ENCODE measurements at regions of chr7 and their contacts with region 1.

Region 1: GRCh38 chr7:142459551-142459963 is 201.7 kb upstream of the PRSS58 start:
- DNase-seq: peak; percentile 82 to 96
- H3K4me3 ChIP-seq: no peak overlapping the region
- H3K27ac ChIP-seq: peak overlapping the region; percentile 45
- H3K4me1 ChIP-seq: peaks cover 26% of the 10 kb centered on the region
- H3K27me3 ChIP-seq: no peaks in the 10 kb centered on the region
- CTCF ChIP-seq: peak; percentile 91

Region 2: DNA sequence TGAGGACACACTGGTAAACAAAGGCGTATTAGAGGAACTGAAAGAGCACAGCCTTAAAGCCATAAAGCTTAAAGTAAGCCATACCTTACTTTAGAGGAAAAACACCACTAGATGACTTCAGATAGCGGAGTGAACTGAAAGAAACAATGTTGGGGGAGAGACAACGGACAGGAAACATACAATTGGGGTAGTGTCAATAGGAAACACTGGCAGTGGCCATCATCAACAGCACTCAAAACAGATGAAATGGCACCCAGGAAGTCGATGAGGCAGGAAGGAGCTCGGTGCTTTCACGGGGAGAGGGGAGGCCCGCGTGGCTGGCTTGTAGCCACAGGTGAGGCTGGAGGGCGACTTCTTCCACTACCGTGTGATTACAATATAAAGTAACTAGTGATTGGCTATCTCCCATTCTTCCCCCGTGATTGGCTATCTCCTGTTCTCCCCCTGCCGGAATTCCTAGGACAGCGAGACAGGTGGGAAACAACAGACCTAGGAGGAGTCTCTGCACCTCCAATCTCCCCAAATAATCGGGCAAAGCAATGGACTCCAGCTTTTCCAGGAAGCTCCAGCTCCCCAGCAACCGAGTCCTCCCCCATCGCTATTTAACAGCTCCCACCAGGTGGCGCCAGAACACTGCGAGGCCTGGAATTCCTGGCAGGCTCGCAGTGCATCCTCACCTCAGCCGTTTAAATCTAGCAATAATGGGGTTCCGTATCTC is 483.6 kb before region 1 on chr7:
- CTCF ChIA-PET with region 1: no interaction called
- POLR2A ChIA-PET with region 1: no interaction called
- intact Hi-C with region 1: loop called (anchors 5 kb)
- DNase-seq: peak; percentile 44 to 86
- H3K4me3 ChIP-seq: no peak overlapping the region
- H3K27ac ChIP-seq: no peak overlapping the region
- H3K4me1 ChIP-seq: no peaks in the 10 kb centered on the region; the same call in 1 of the 2 replicates
- H3K27me3 ChIP-seq: no peaks in the 10 kb centered on the region
- CTCF ChIP-seq: peak; percentile 96

Region 3: GRCh38 chr7:142385491-142386340 is 73.8 kb before region 1 on chr7:
- CTCF ChIA-PET with region 1: interaction called, 7 read pairs
- POLR2A ChIA-PET with region 1: no interaction called
- intact Hi-C with region 1: loop called (anchors 1 kb)
- DNase-seq: peak; percentile 64 to 69
- H3K4me3 ChIP-seq: no peak overlapping the region
- H3K27ac ChIP-seq: no peak overlapping the region
- H3K4me1 ChIP-seq: 0 out of 2 replicates have a peak, but pooled peaks cover 12% of the 10 kb centered on the region
- H3K27me3 ChIP-seq: no peaks in the 10 kb centered on the region
- CTCF ChIP-seq: peak; percentile 79

Region 4: GRCh38 chr7:142428094-142428493 is 31.5 kb before region 1 on chr7:
- CTCF ChIA-PET with region 1: no interaction called
- POLR2A ChIA-PET with region 1: no interaction called
- intact Hi-C with region 1: no loop called
- DNase-seq: no peak
- H3K4me3 ChIP-seq: no peak overlapping the region
- H3K27ac ChIP-seq: no peak overlapping the region
- H3K4me1 ChIP-seq: no peaks in the 10 kb centered on the region
- H3K27me3 ChIP-seq: no peaks in the 10 kb centered on the region
- CTCF ChIP-seq: no peak

Region 5: GRCh38 chr7:142440219-142440905 is 19.2 kb before region 1 on chr7:
- CTCF ChIA-PET with region 1: interaction called, 4 read pairs
- POLR2A ChIA-PET with region 1: no interaction called
- intact Hi-C with region 1: loop called (anchors 1 kb)
- DNase-seq: peak; percentile 67 to 90
- H3K4me3 ChIP-seq: peak overlapping the region; percentile 16; the same call in 1 of the 2 replicates
- H3K27ac ChIP-seq: peak overlapping the region; percentile 79
- H3K4me1 ChIP-seq: peaks cover 46% of the 10 kb centered on the region
- H3K27me3 ChIP-seq: no peaks in the 10 kb centered on the region
- CTCF ChIP-seq: no peak

Region 6: GRCh38 chr7:142516038-142516501 is 56.5 kb after region 1 on chr7:
- CTCF ChIA-PET with region 1: interaction called, 9 read pairs
- POLR2A ChIA-PET with region 1: no interaction called
- intact Hi-C with region 1: loop called (anchors 1 kb)
- DNase-seq: peak; percentile 72 to 87
- H3K4me3 ChIP-seq: no peak overlapping the region
- H3K27ac ChIP-seq: peak overlapping the region; percentile 79
- H3K4me1 ChIP-seq: peaks cover 48% of the 10 kb centered on the region
- H3K27me3 ChIP-seq: no peaks in the 10 kb centered on the region
- CTCF ChIP-seq: peak; percentile 97

Region 7: DNA sequence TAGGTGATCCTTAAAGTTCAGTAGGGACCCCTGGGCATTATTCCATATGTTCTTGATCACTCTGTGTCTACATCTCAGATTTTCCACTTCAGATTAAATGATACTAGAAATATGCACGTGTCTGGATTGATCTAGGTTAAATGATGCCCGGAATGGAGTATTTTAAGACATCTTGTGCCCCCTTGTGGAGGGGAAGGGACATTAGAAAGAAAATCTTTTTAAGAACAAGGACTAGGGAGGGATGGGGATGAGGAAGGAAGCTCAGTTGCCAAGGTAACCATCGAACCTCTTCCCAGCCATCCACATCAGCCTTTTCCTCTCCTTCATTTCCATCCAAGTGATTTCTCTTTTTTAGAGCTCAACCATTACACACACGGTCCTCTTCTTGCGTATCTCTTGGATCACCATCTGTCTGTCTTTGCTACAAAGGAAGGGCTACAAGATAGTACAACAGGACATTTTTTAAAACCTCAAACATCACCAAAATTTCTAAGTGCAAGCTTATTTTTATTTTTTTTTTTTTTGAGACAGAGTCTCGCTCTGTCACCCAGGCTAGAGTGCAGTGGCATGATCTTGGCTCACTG is 351.7 kb after region 1 on chr7:
- CTCF ChIA-PET with region 1: interaction called, 7 read pairs
- POLR2A ChIA-PET with region 1: no interaction called
- intact Hi-C with region 1: loop called (anchors 1 kb)
- DNase-seq: peak; percentile 22 to 78
- H3K4me3 ChIP-seq: no peak overlapping the region
- H3K27ac ChIP-seq: peak overlapping the region; percentile 96
- H3K4me1 ChIP-seq: peaks cover 84% of the 10 kb centered on the region
- H3K27me3 ChIP-seq: no peaks in the 10 kb centered on the region
- CTCF ChIP-seq: peak; percentile 95

Measured in PC-9 (cell line).